Breast epithelium (tissue), 4 donors: ENCODE measurements at regions of chr3 and their contacts with region 1.

Region 1: GRCh38 chr3:116394365-116394764 is 50.9 kb downstream of the LSAMP start:
- DNase-seq: no peak
- H3K4me3 ChIP-seq: no peak overlapping the region
- H3K27ac ChIP-seq: no peak overlapping the region
- H3K4me1 ChIP-seq: no peaks in the 10 kb centered on the region
- H3K27me3 ChIP-seq: no peaks in the 10 kb centered on the region
- CTCF ChIP-seq: no peak
- POLR2A ChIP-seq: no peak

Region 2: DNA sequence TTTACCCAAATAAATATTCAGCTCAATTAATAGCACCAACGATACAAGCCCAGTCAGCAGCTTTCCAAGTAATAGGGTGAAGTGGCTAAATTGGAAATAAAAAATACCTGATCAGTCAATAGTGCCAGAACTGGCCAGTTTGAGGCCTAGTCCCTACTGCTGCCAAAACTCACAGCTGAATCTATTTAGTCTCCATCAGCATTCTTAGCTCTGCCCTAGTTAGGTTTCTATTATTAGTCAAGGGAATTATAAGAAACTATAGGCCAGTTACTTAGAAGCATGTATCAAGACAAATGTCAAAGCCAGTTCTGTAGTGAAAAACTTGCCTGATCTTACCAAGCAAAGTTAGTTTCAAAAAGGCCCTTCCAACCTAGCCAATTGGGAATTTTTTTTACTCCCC is 1101.0 kb before region 1 on chr3:
- intact Hi-C with region 1: no loop called
- DNase-seq: no peak
- H3K4me3 ChIP-seq: no peak overlapping the region
- H3K27ac ChIP-seq: no peak overlapping the region
- H3K4me1 ChIP-seq: no peaks in the 10 kb centered on the region
- H3K27me3 ChIP-seq: no peaks in the 10 kb centered on the region
- CTCF ChIP-seq: no peak
- POLR2A ChIP-seq: no peak

Region 3: DNA sequence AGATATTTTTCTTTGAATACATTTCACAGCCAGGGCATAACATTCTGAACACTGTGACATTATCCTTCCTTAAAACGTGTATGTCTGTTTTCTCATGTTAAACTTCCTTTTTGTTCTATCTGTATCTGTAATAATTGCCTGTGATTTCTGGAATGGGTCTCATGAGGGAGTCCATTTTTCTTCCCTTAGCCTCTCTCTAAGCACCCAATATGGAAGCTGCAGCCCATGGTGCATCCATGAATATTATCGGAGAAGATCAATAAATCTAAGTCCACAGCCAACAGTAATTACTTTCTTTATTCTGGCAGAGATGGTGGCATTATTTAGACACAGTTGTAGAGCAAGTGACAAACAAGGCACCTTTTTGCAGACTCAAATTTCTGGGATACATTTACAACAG is 986.3 kb after region 1 on chr3:
- intact Hi-C with region 1: loop called (anchors 5 kb)
- DNase-seq: no peak
- H3K4me3 ChIP-seq: no peak overlapping the region
- H3K27ac ChIP-seq: no peak overlapping the region
- H3K4me1 ChIP-seq: no peaks in the 10 kb centered on the region
- H3K27me3 ChIP-seq: no peaks in the 10 kb centered on the region
- CTCF ChIP-seq: no peak
- POLR2A ChIP-seq: no peak